ENCODE measurements at regions of chr2 and their contacts with region 1.

Region 1: DNA sequence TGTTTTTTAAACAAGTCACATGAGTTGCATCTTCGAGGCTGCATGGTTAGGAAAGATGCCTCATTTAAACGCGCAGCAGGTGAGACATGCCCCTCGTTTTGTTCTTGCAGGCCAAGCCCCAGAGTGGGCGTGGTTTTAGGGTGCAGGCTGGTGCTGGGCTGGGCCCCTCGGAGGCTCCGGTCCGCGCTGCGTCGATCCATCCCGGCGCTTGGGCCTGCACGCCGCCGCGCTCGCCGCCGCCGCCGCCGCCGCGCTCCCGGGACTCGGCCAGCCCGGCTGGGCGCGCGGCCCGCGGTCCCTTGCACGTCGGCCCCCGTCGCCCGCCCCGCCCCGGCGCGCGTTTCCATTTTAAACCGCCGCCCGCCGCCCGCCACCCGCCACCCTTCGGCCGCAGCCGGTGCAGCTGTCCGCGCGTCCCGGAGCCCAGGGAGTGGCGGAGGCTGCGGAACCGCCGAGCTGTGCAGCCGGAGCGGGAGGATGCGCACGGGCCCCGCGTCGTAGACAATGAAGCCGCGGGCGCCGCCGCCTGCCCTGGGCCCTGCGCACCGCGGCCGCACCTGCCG is 175.5 kb downstream of the AGAP1 start:
- DNase-seq: peak; percentile 84
- H3K4me3 ChIP-seq: peak overlapping the region; percentile 35 to 68 (median 60)
- H3K27ac ChIP-seq: peak overlapping the region; percentile 72 to 86 (median 78)
- H3K4me1 ChIP-seq: peaks cover 0 to 69% (median 51%) of the 10 kb centered on the region in 4 donors
- H3K27me3 ChIP-seq: no peaks in the 10 kb centered on the region
- CTCF ChIP-seq: no peak
- EP300 ChIP-seq: no peak
- POLR2A ChIP-seq: no peak

Region 2: GRCh38 chr2:235135990-235136561 is 533.3 kb before region 1 on chr2:
- intact Hi-C with region 1: loop called (anchors 5 kb)
- DNase-seq: peak; percentile 90
- H3K4me3 ChIP-seq: no peak overlapping the region
- H3K27ac ChIP-seq: no peak overlapping the region
- H3K4me1 ChIP-seq: peaks cover 0 to 3% (median 0%) of the 10 kb centered on the region in 4 donors
- H3K27me3 ChIP-seq: no peaks in the 10 kb centered on the region
- CTCF ChIP-seq: peak; percentile 65 to 79 (median 74)
- EP300 ChIP-seq: no peak
- POLR2A ChIP-seq: no peak

Region 3: GRCh38 chr2:235433860-235434259 is 235.5 kb before region 1 on chr2:
- intact Hi-C with region 1: loop called (anchors 10 kb)
- DNase-seq: no peak
- H3K4me3 ChIP-seq: no peak overlapping the region
- H3K27ac ChIP-seq: peak overlapping the region in 1 of 4 donors; percentile 34
- H3K4me1 ChIP-seq: peaks cover 0 to 11% (median 0%) of the 10 kb centered on the region in 4 donors
- H3K27me3 ChIP-seq: no peaks in the 10 kb centered on the region
- CTCF ChIP-seq: peak in 2 of 4 experiments; percentile 6 to 19
- EP300 ChIP-seq: no peak
- POLR2A ChIP-seq: no peak

Region 4: GRCh38 chr2:235493775-235494715 is 175.3 kb before region 1 on chr2 and contains the start of gene AGAP1:
- intact Hi-C with region 1: loop called (anchors 5 kb)
- DNase-seq: peak; percentile 94
- H3K4me3 ChIP-seq: peak within 1 kb of the TSS; percentile 51 to 80 (median 68)
- H3K27ac ChIP-seq: peak within 1 kb of the TSS; percentile 80 to 88 (median 87)
- H3K4me1 ChIP-seq: peaks cover 0 to 35% (median 28%) of the 10 kb centered on the region in 4 donors
- H3K27me3 ChIP-seq: no peaks in the 10 kb centered on the region
- CTCF ChIP-seq: no peak
- EP300 ChIP-seq: no peak
- POLR2A ChIP-seq: no peak
- total RNA-seq, gene AGAP1: 18.6 to 42.7 (median 23.8) TPM

Region 5: GRCh38 chr2:235595422-235596010 is 73.8 kb before region 1 on chr2:
- intact Hi-C with region 1: loop called (anchors 1 kb)
- DNase-seq: peak; percentile 87
- H3K4me3 ChIP-seq: no peak overlapping the region
- H3K27ac ChIP-seq: no peak overlapping the region
- H3K4me1 ChIP-seq: peaks cover 0 to 31% (median 19%) of the 10 kb centered on the region in 4 donors
- H3K27me3 ChIP-seq: no peaks in the 10 kb centered on the region
- CTCF ChIP-seq: peak; percentile 78 to 88 (median 86)
- EP300 ChIP-seq: no peak
- POLR2A ChIP-seq: no peak

Region 6: GRCh38 chr2:235639428-235639773 is 29.9 kb before region 1 on chr2:
- intact Hi-C with region 1: loop called (anchors 2 kb)
- DNase-seq: peak; percentile 96
- H3K4me3 ChIP-seq: peak overlapping the region in 1 of 4 donors; percentile 6
- H3K27ac ChIP-seq: peak overlapping the region; percentile 84 to 94 (median 90)
- H3K4me1 ChIP-seq: peaks cover 0 to 58% (median 50%) of the 10 kb centered on the region in 4 donors
- H3K27me3 ChIP-seq: no peaks in the 10 kb centered on the region
- CTCF ChIP-seq: no peak
- EP300 ChIP-seq: peak in 2 of 4 donors; percentile 42 to 89
- POLR2A ChIP-seq: peak in 1 of 2 donors; percentile 76

Measured in sigmoid colon (tissue), 7 donors.